Activated CD8-positive, alpha-beta T cell treated with anti-CD3 and anti-CD28 coated beads for 36 hours (primary cell): ENCODE measurements at regions of chr11 and their contacts with region 1.

Region 1: DNA sequence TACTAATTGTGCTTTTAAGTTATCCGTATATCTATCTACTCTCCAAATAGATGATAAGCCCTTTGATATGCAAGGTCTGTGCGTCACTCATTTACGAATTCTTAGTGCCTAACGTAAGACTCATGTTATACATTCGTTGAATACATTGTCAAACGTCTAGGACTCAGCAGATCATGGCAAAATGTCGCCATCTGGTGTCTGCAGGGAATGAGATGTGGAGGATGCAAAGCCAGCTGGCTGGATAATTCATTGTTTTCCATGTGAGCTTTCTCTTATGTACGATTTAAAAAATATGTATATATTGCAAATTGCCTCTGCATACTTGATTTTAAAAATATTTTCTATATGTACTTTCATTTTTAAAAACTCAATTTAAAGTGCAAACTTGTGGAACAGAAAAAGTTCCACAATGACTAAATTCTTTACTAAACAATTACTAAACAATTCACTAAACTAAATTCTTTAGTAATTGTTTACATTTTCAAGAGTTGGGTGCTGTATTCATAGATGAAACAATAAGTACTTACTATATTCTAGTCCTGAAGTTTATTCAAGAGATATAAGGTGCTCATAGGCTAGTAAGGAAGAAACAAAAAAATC is 33.8 kb downstream of the ZNF202 start:
- DNase-seq: peak; percentile 79
- ATAC-seq: peak; percentile 65
- H3K4me3 Mint-ChIP-seq: no peak overlapping the region
- H3K27ac Mint-ChIP-seq: no peak overlapping the region
- H3K4me1 Mint-ChIP-seq: no peaks in the 10 kb centered on the region
- H3K27me3 Mint-ChIP-seq: peaks cover 4% of the 10 kb centered on the region
- CTCF ChIP-seq: peak; percentile 72

Region 2: DNA sequence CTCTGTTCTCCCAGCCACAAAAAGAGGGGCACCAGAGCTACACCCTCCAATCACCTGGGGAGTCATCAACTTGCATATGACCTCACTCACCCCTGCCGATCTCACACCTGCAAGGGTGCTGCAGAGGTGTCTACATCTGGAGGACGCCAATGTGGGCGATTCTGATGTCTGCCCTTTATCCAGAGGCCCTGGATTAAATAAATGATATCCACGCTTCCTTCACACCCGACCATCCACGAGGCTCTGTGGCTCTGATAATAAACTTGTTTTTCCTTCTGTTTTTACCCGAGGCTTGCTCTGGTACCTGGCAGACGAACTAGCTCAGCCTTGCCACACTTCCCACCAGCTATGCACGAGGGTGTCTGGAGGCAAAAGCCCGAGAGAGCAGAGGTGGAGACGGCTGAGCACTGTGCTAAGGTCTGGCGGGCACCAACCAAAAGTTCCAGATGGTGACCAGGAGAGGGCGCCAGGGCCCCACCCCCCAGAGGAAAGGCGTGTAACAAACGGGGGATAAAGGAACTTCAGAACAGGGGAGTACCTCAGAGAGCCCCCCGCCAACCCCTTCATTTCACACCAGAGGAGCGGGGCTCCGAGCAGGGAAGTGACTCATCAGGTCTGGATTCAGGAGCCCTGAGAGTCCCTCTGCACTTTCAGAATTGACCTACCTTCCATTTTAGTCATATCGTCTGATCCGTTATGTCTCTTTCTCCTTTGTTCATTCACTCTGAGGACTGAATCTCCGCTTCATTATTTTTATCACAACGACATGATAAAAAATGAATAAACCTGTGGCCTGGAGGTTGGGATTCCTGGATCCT is 66.8 kb before region 1 on chr11:
- CTCF ChIA-PET with region 1: interaction called, 196 read pairs
- POLR2A ChIA-PET with region 1: no interaction called
- intact Hi-C with region 1: loop called (anchors 2 kb)
- DNase-seq: peak; percentile 67
- ATAC-seq: peak; percentile 96
- H3K4me3 Mint-ChIP-seq: no peak overlapping the region
- H3K27ac Mint-ChIP-seq: no peak overlapping the region
- H3K4me1 Mint-ChIP-seq: peaks cover 1% of the 10 kb centered on the region
- H3K27me3 Mint-ChIP-seq: peaks cover 21% of the 10 kb centered on the region
- CTCF ChIP-seq: peak; percentile 89

Region 3: DNA sequence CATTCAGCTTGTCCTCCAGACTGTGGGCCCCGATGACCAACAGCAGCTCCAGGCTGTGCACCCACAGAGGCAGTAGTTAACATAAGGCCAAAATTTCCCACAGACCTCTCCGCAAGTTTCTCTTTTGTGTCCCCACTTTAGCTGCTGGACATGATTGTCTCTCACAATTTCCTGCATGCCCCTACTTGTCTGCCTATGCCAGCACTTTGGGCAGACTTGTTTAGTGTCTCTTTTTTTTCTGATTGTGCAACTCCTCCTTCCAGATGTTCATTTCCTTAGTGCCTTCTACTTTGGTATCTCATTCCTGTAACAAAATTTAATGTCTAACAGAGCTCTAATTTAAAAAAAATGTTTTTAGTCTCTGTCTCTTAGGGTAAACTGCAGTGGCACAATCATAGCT is 29.5 kb before region 1 on chr11:
- CTCF ChIA-PET with region 1: interaction called, 12 read pairs
- POLR2A ChIA-PET with region 1: no interaction called
- intact Hi-C with region 1: no loop called
- DNase-seq: no peak
- ATAC-seq: no peak
- H3K4me3 Mint-ChIP-seq: no peak overlapping the region
- H3K27ac Mint-ChIP-seq: no peak overlapping the region
- H3K4me1 Mint-ChIP-seq: peaks cover 15% of the 10 kb centered on the region
- H3K27me3 Mint-ChIP-seq: peaks cover 3% of the 10 kb centered on the region
- CTCF ChIP-seq: no peak

Region 4: DNA sequence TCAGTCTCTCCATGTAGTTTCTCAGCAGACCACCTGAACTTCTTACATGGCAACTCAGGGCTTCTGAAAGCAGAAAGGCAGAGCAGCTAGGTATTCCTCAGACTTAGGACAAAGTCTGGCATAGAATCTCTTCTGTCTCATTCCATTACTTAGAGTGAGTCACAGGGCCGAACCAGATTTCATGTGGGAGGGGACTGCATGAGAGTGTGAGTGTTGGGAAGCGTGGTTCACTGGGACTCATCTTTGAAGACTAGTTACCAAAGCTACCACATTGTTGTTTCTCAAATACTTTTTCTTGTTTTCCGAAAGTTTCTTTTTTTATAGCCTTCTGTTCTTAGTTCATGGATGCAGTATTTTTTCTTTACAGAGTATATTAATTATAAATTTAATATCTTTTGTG is 17.2 kb before region 1 on chr11:
- CTCF ChIA-PET with region 1: interaction called, 18 read pairs
- POLR2A ChIA-PET with region 1: interaction called, 8 read pairs
- intact Hi-C with region 1: no loop called
- DNase-seq: peak; percentile 4
- ATAC-seq: peak; percentile 51
- H3K4me3 Mint-ChIP-seq: no peak overlapping the region
- H3K27ac Mint-ChIP-seq: no peak overlapping the region
- H3K4me1 Mint-ChIP-seq: no peaks in the 10 kb centered on the region
- H3K27me3 Mint-ChIP-seq: peaks cover 9% of the 10 kb centered on the region
- CTCF ChIP-seq: no peak

Region 5: DNA sequence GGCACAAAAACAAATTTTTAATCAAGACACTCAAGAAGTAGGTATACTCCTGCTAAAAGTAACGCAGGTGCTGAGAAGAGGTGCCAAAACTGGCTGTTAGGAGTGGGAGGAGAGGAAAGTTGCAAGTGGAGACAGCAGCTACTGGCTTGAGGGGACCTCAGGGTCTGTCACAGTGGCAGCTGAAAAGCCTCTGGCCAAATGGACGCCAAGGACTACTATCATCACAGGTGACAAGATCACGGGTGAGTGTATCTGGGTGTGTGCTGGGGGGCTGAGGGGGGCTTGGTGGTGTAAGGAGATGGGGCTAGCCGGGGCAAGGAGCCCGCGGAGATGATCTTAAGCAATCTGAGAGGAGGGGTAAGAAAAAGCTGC is 33.1 kb after region 1 on chr11:
- CTCF ChIA-PET with region 1: interaction called, 10 read pairs
- POLR2A ChIA-PET with region 1: no interaction called
- intact Hi-C with region 1: no loop called
- DNase-seq: no peak
- ATAC-seq: no peak
- H3K4me3 Mint-ChIP-seq: peak overlapping the region; percentile 82
- H3K27ac Mint-ChIP-seq: peak overlapping the region; percentile 80
- H3K4me1 Mint-ChIP-seq: peaks cover 33% of the 10 kb centered on the region
- H3K27me3 Mint-ChIP-seq: no peaks in the 10 kb centered on the region
- CTCF ChIP-seq: peak; percentile 14

Region 6: GRCh38 chr11:123833095-123833494 is 125.4 kb after region 1 on chr11:
- CTCF ChIA-PET with region 1: no interaction called
- POLR2A ChIA-PET with region 1: no interaction called
- intact Hi-C with region 1: no loop called
- DNase-seq: no peak
- ATAC-seq: no peak
- H3K4me3 Mint-ChIP-seq: no peak overlapping the region
- H3K27ac Mint-ChIP-seq: no peak overlapping the region
- H3K4me1 Mint-ChIP-seq: no peaks in the 10 kb centered on the region
- H3K27me3 Mint-ChIP-seq: peaks cover 16% of the 10 kb centered on the region
- CTCF ChIP-seq: no peak